ENCODE measurements at regions of chr17 and their contacts with region 1.

Region 1: GRCh38 chr17:1122533-1123392 is 57.0 kb downstream of the ABR start:
- DNase-seq: peak; percentile 71 to 91
- ATAC-seq: peak; percentile 72 to 94
- H3K4me3 ChIP-seq: no peak overlapping the region
- H3K27ac ChIP-seq: peak overlapping the region; percentile 31 to 44; a peak in 5 of 6 replicates
- H3K4me1 ChIP-seq: peaks cover 14% of the 10 kb centered on the region; the same call in 2 of the 3 replicates
- CTCF ChIP-seq: peak; percentile 92
- EP300 ChIP-seq: no peak
- POLR2A ChIP-seq: no peak
- RAD21 ChIP-seq: peak; percentile 92 to 93

Region 2: DNA sequence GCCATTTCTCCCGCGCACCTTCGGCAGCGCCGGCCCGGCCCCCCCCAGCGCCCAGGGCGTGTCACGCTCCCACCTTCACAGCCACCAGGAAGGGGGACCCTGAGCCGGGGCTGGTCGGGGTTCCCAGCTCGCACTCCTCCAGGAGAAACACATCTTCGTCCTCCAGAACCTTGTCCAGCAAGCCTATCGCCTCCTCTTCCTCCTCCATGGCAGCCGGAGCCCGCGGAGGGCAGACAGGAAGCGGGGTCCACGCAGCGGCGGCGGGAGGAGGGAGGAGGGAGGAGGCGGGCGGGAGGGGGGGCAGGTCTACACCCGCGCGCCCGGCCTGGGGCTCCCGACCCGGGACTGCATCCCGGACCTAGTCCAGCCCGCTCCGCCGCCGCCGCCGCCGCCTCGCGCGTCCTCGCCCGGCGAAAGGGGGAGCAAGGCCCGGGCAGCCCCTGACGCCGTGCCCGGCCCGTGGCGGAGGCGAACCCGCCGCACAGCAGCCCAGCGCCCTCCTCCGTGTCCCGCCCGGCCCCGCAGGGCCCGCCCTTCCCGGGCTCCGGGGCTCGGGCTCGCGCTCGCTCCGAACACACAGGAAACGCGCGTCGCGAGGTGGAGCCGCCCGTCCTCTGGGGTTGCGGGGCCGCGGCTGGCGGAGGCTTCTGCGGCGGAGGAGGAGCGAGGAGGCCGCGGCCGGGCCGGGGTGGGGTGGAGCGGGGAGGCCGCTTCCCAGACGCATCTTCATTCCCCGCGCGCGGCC is 13.7 kb before region 1 on chr17:
- CTCF ChIA-PET with region 1: interaction called, 57 read pairs
- POLR2A ChIA-PET with region 1: no interaction called
- DNase-seq: peak; percentile 48 to 66
- ATAC-seq: peak; percentile 39 to 40
- H3K4me3 ChIP-seq: peak overlapping the region; percentile 80
- H3K27ac ChIP-seq: peak overlapping the region; percentile 98 to 99
- H3K4me1 ChIP-seq: peaks cover 45% of the 10 kb centered on the region
- CTCF ChIP-seq: no peak
- EP300 ChIP-seq: no peak
- POLR2A ChIP-seq: peak; percentile 45
- RAD21 ChIP-seq: no peak

Region 3: DNA sequence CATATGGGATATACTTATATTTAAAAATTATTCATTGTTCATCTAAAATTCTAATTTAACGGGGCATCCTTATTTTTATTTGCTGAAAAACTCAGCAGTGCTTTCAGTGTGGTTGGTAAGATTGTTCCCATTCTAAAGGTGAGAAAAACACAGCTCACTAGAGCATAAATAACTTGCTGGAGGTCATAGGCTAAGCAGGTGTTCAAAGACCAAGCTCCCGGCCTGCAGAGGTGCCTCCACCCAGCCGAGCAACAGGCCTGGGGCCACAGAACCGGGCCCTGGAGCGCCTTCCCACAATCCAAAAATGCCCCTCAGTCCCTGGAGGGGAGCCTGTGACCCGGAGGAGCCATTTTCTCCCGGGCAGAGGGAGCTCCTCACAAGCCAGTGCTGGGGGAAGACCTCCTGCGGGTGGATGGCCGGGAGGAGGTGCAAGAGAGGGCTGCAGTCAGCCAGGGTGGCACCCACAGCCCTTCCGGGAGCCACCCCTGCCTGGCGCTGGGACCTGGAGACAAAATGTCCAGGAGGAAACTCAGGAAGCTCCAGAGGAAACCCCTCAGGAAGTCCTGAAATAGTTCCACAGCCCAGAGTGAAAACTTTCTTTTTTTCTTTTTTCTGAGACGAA is 42.3 kb after region 1 on chr17:
- CTCF ChIA-PET with region 1: interaction called, 19 read pairs
- POLR2A ChIA-PET with region 1: no interaction called
- DNase-seq: no peak
- ATAC-seq: peak; percentile 16 to 48; a peak in 3 of 6 replicates
- H3K4me3 ChIP-seq: no peak overlapping the region
- H3K27ac ChIP-seq: no peak overlapping the region
- H3K4me1 ChIP-seq: no peaks in the 10 kb centered on the region
- CTCF ChIP-seq: no peak
- EP300 ChIP-seq: no peak
- POLR2A ChIP-seq: no peak
- RAD21 ChIP-seq: no peak

Region 4: GRCh38 chr17:1179818-1180742 is 57.3 kb after region 1 on chr17 and contains the start of gene ABR:
- CTCF ChIA-PET with region 1: interaction called, 324 read pairs
- POLR2A ChIA-PET with region 1: no interaction called
- DNase-seq: no peak
- ATAC-seq: peak; percentile 25 to 43; a peak in 5 of 6 replicates
- H3K4me3 ChIP-seq: peak within 1 kb of the TSS; percentile 86
- H3K27ac ChIP-seq: peak within 1 kb of the TSS; percentile 80 to 91
- H3K4me1 ChIP-seq: peaks cover 6% of the 10 kb centered on the region; the same call in 1 of the 3 replicates
- CTCF ChIP-seq: no peak
- EP300 ChIP-seq: no peak
- POLR2A ChIP-seq: no peak; the same call in 1 of the 2 replicates
- RAD21 ChIP-seq: no peak
- polyA plus RNA-seq, gene ABR: 62.5 and 70.9 TPM in 2 replicates

Region 5: DNA sequence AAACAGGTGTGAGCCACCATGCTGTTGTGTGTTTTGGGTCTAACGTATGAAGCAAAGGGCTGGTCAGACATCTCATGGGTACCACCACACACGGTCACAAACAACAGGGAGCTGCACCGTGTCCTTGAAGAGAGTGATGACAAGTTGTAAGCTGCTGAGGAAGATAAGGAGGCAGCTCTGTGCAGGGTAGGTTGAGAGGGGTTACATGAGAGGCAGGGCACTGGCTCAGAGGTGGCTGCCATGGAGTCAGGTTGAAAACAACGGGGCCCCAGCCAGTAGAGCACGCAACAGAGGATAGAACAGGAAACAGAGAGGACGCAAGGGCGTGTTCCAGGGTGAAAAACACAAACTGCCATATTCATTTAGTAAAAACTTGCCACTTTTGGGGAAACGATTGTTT is 208.9 kb after region 1 on chr17:
- CTCF ChIA-PET with region 1: interaction called, 12 read pairs
- POLR2A ChIA-PET with region 1: no interaction called
- DNase-seq: no peak
- ATAC-seq: no peak
- H3K4me3 ChIP-seq: no peak overlapping the region
- H3K27ac ChIP-seq: no peak overlapping the region
- H3K4me1 ChIP-seq: no peaks in the 10 kb centered on the region
- CTCF ChIP-seq: no peak
- EP300 ChIP-seq: no peak
- POLR2A ChIP-seq: no peak
- RAD21 ChIP-seq: no peak

Region 6: DNA sequence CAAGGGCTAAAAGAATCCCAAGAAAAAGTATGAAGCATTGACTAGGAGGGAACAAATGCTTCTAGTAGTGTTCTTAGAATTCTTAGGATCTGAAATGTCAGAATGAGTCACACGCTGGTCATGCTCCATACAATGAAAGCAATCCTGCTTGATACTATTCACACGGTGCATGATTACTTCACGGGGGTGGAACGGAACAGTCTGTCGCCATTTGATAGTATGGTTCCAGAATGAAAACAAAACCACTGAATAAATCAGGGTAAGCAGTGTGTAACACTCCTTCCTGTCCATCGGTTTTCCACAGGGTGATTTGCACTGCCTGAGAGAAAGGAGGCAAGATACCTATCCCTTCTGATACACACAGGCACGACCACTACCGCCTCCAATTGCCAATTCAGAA is 300.1 kb after region 1 on chr17:
- CTCF ChIA-PET with region 1: no interaction called
- POLR2A ChIA-PET with region 1: no interaction called
- DNase-seq: peak; percentile 57 to 71
- ATAC-seq: peak; percentile 82 to 85
- H3K4me3 ChIP-seq: no peak overlapping the region
- H3K27ac ChIP-seq: no peak overlapping the region; a peak in 2 of 6 replicates
- H3K4me1 ChIP-seq: peaks cover 22% of the 10 kb centered on the region
- CTCF ChIP-seq: no peak
- EP300 ChIP-seq: no peak
- POLR2A ChIP-seq: no peak
- RAD21 ChIP-seq: no peak